ENCODE measurements at regions of chr11 and their contacts with region 1.

Region 1: GRCh38 chr11:66311965-66312548 is 4.8 kb downstream of the CD248 start:
- DNase-seq: peak; percentile 91 to 100 (median 99)
- ATAC-seq: peak; percentile 74
- H3K4me3 ChIP-seq: peak overlapping the region; percentile 61
- H3K4me3 Mint-ChIP-seq: peak overlapping the region; percentile 90
- H3K27ac ChIP-seq: peak overlapping the region; percentile 65 to 90
- H3K27ac Mint-ChIP-seq: peak overlapping the region; percentile 95
- H3K4me1 ChIP-seq: peaks cover 51% of the 10 kb centered on the region
- H3K4me1 Mint-ChIP-seq: peaks cover 22% of the 10 kb centered on the region
- H3K27me3 ChIP-seq: no peaks in the 10 kb centered on the region
- H3K27me3 Mint-ChIP-seq: peaks cover 4% of the 10 kb centered on the region
- CTCF ChIP-seq: peak; percentile 97

Region 2: GRCh38 chr11:66288671-66289547 is 23.1 kb before region 1 on chr11 and contains the start of gene YIF1A:
- CTCF ChIA-PET with region 1: interaction called, 7 read pairs
- POLR2A ChIA-PET with region 1: interaction called, 29 read pairs
- intact Hi-C with region 1: loop called in 1 of 2 experiments (anchors 1 kb)
- DNase-seq: peak; percentile 95 to 100 (median 97)
- ATAC-seq: peak; percentile 91
- H3K4me3 ChIP-seq: peak within 1 kb of the TSS; percentile 82
- H3K4me3 Mint-ChIP-seq: peak within 1 kb of the TSS; percentile 87
- H3K27ac ChIP-seq: peak within 1 kb of the TSS; percentile 69 to 80
- H3K27ac Mint-ChIP-seq: peak within 1 kb of the TSS; percentile 79
- H3K4me1 ChIP-seq: peaks cover 50% of the 10 kb centered on the region
- H3K4me1 Mint-ChIP-seq: peaks cover 32% of the 10 kb centered on the region
- H3K27me3 ChIP-seq: peaks cover 18 to 23% of the 10 kb centered on the region in 2 experiments
- H3K27me3 Mint-ChIP-seq: peaks cover 19% of the 10 kb centered on the region
- CTCF ChIP-seq: no peak
- total RNA-seq, gene YIF1A: 17.4 to 21.1 TPM

Region 3: DNA sequence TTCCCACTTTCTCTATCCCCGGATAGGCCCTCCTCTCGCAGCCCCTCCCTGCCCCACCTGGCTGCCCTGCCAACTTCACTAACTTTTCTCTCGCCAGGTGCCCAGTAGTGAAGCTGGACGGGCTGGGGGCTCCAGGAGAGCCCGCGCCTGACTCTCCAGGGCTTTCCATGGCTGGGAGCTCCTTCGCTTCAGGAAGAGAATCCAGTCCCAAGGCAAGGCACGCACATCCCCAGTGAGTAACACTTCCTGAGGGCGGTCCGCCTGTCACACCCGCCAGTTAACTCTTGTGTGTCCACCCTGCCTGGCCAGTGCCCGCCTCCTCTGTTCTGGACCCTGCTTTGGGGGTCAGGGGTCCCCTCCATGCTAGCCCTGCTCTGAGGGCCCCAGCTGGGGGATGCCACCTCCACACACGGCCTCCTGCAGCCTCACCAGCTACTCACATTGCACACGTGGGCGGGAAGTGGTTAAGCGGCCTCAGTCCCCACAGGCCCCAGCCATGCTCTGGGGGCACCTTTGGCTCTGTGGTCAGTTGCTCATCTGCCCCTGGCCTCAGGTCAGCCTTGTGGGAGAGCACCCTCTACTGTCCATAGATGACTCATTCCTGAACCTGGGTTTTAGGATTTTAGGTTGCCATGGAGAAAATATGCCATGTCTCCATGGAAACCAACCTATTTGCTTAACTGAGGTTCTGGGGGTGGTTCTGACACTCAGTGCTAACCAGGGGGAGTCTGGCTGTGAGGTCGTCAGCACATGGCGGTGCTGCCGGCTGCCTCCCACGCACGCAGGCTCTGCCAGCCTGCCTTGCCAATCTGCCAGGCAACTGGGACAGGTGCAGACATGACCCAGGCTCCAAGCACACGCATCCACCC is 24.4 kb after region 1 on chr11 and contains the start of gene RIN1:
- CTCF ChIA-PET with region 1: interaction called, 30 read pairs
- POLR2A ChIA-PET with region 1: interaction called, 13 read pairs
- intact Hi-C with region 1: no loop called
- DNase-seq: peak in 6 of 14 experiments; percentile 28 to 73 (median 48)
- ATAC-seq: peak; percentile 68
- H3K4me3 ChIP-seq: peak within 1 kb of the TSS; percentile 63
- H3K4me3 Mint-ChIP-seq: peak within 1 kb of the TSS; percentile 89
- H3K27ac ChIP-seq: no peak within 1 kb of the TSS
- H3K27ac Mint-ChIP-seq: peak within 1 kb of the TSS; percentile 49
- H3K4me1 ChIP-seq: peaks cover 28% of the 10 kb centered on the region
- H3K4me1 Mint-ChIP-seq: peaks cover 19% of the 10 kb centered on the region
- H3K27me3 ChIP-seq: no peaks in the 10 kb centered on the region
- H3K27me3 Mint-ChIP-seq: no peaks in the 10 kb centered on the region
- CTCF ChIP-seq: no peak
- total RNA-seq, gene RIN1: 1.2 to 1.6 TPM

Region 4: GRCh38 chr11:66371627-66372415 is 59.8 kb after region 1 on chr11 and contains the start of gene SLC29A2:
- CTCF ChIA-PET with region 1: interaction called, 8 read pairs
- POLR2A ChIA-PET with region 1: interaction called, 24 read pairs
- intact Hi-C with region 1: no loop called
- DNase-seq: peak; percentile 50 to 89 (median 75)
- ATAC-seq: peak; percentile 73
- H3K4me3 ChIP-seq: peak within 1 kb of the TSS; percentile 79
- H3K4me3 Mint-ChIP-seq: peak within 1 kb of the TSS; percentile 97
- H3K27ac ChIP-seq: peak within 1 kb of the TSS; percentile 60 to 74
- H3K27ac Mint-ChIP-seq: peak within 1 kb of the TSS; percentile 92
- H3K4me1 ChIP-seq: peaks cover 16% of the 10 kb centered on the region
- H3K4me1 Mint-ChIP-seq: peaks cover 9% of the 10 kb centered on the region
- H3K27me3 ChIP-seq: no peaks in the 10 kb centered on the region
- H3K27me3 Mint-ChIP-seq: no peaks in the 10 kb centered on the region
- CTCF ChIP-seq: no peak
- total RNA-seq, gene SLC29A2: 9.7 TPM

Region 5: GRCh38 chr11:66438504-66439466 is 126.7 kb after region 1 on chr11 and contains the start of gene MRPL11:
- CTCF ChIA-PET with region 1: interaction called, 3 read pairs
- POLR2A ChIA-PET with region 1: interaction called, 12 read pairs
- intact Hi-C with region 1: no loop called
- DNase-seq: peak; percentile 78 to 95 (median 86)
- ATAC-seq: peak; percentile 99
- H3K4me3 ChIP-seq: peak within 1 kb of the TSS; percentile 70
- H3K4me3 Mint-ChIP-seq: peak within 1 kb of the TSS; percentile 94
- H3K27ac ChIP-seq: peak within 1 kb of the TSS; percentile 67 to 89
- H3K27ac Mint-ChIP-seq: peak within 1 kb of the TSS; percentile 87
- H3K4me1 ChIP-seq: peaks cover 11% of the 10 kb centered on the region
- H3K4me1 Mint-ChIP-seq: peaks cover 13% of the 10 kb centered on the region
- H3K27me3 ChIP-seq: no peaks in the 10 kb centered on the region
- H3K27me3 Mint-ChIP-seq: peaks cover 3% of the 10 kb centered on the region
- CTCF ChIP-seq: peak; percentile 69
- total RNA-seq, gene MRPL11: 17.7 to 21.0 TPM

Measured in CD4-positive, alpha-beta T cell (primary cell).